Uterus (tissue), 4 donors: ENCODE measurements at regions of chr14 and their contacts with region 1.

Region 1: GRCh38 chr14:75278422-75279161 is at the start of gene FOS:
- DNase-seq: peak; percentile 91 to 95
- H3K4me3 ChIP-seq: peak within 1 kb of the TSS; percentile 68 to 79
- H3K27ac ChIP-seq: peak within 1 kb of the TSS; percentile 98 to 99
- H3K4me1 ChIP-seq: peaks cover 13 to 21% of the 10 kb centered on the region in 2 donors
- H3K27me3 ChIP-seq: no peaks in the 10 kb centered on the region
- CTCF ChIP-seq: no peak
- POLR2A ChIP-seq: peak; percentile 89 to 99
- total RNA-seq, gene FOS: 29.2 to 1,111 (median 137) TPM

Region 2: DNA sequence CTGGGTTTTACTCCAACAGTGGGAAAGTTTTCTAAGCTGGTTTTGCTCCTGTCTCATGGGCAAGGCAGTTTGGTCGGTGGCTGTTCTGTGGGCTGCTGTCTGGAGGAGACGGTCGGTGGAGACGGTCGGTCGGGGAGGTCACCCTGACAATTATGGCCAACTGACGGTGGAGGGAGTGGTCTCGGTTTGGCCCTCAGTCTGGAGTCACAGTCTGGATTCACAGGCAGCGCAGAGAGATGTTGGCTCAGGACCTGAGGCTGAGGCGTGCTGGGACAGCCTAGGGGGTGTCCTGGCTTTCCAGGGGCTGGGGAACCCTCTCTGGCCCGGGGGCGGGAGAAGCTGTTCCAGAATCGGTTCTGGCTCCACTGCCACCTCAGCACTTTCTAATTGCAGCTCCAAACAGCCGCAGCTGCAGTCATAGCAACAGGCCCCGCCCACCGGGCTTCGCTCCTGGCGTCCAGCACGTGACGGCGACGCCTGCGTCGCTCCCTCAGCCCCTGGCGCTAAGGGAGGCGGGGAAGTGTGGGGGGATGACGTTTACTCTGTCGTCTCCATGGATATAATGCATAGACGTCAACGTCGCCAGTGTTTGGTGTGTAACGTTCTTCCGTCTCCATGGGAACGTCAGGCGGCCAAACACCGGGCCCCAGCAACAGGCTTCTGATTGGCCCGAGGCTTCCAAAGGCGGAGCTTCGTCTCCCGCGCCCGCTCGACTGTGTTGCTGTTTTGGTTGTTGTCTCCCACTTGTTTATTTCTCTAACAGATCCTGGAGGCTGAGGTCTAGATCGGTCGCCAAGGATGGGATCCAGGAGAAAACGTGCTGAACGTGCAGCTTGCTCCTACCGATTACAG is 19.8 kb before region 1 on chr14:
- intact Hi-C with region 1: loop called (anchors 2 kb)
- DNase-seq: peak; percentile 98 to 99
- H3K4me3 ChIP-seq: peak overlapping the region; percentile 29 to 36
- H3K27ac ChIP-seq: peak overlapping the region; percentile 95 to 96
- H3K4me1 ChIP-seq: no peaks in the 10 kb centered on the region
- H3K27me3 ChIP-seq: no peaks in the 10 kb centered on the region
- CTCF ChIP-seq: peak in 1 of 4 experiments; percentile 1
- POLR2A ChIP-seq: peak; percentile 47 to 74

Region 3: GRCh38 chr14:75837151-75837787 is 558.7 kb after region 1 on chr14:
- intact Hi-C with region 1: no loop called
- DNase-seq: no peak
- H3K4me3 ChIP-seq: no peak overlapping the region
- H3K27ac ChIP-seq: no peak overlapping the region
- H3K4me1 ChIP-seq: no peaks in the 10 kb centered on the region
- H3K27me3 ChIP-seq: no peaks in the 10 kb centered on the region
- CTCF ChIP-seq: no peak
- POLR2A ChIP-seq: no peak